Dendritic cell treated with granulocyte-macrophage colony-stimulating factor and Interleukin-4, amounts not matched to agents 40 ng/mL and 50 ng/mL, for 4 days (primary cell): ENCODE measurements at regions of chr10 and their contacts with region 1.

Region 1: DNA sequence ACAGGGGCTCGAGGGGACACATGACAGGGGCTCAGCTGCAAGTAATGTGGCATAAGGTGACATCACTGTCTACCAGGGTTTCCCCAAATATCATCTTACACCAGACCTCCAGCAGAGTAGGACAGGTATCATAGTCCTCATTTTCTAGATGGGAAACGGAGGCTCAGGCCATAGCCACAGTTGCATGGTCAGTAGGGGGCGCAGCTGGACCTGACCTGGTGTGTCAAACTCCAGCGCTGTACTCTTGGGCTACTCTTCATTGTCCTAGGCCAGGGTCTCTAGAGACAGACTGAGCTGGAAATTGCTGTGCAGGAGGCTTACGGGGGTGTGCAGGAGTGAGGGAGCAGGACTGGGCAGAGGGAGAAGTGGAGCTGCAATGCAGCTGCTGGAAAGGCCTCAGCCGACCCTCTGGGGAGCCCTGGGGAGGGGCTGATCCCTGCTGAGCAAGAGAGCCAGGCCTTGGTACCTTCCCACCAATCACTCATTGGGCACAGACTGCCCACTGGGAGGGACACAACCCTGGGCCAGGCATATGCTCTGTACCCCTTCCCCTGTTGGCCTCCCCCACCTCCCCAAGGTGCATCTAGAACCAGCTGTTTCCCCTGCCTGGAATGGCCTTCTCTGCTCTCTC is 89.9 kb downstream of the CDH23 start:
- H3K4me3 Mint-ChIP-seq: no peak overlapping the region
- H3K27ac Mint-ChIP-seq: no peak overlapping the region
- H3K4me1 Mint-ChIP-seq: peaks cover 8% of the 10 kb centered on the region
- H3K27me3 Mint-ChIP-seq: peaks cover 5% of the 10 kb centered on the region

Region 2: GRCh38 chr10:71569775-71570588 is 83.4 kb after region 1 on chr10:
- intact Hi-C with region 1: loop called (anchors 5 kb)
- H3K4me3 Mint-ChIP-seq: no peak overlapping the region
- H3K27ac Mint-ChIP-seq: no peak overlapping the region
- H3K4me1 Mint-ChIP-seq: peaks cover 9% of the 10 kb centered on the region
- H3K27me3 Mint-ChIP-seq: peaks cover 2% of the 10 kb centered on the region

Region 3: DNA sequence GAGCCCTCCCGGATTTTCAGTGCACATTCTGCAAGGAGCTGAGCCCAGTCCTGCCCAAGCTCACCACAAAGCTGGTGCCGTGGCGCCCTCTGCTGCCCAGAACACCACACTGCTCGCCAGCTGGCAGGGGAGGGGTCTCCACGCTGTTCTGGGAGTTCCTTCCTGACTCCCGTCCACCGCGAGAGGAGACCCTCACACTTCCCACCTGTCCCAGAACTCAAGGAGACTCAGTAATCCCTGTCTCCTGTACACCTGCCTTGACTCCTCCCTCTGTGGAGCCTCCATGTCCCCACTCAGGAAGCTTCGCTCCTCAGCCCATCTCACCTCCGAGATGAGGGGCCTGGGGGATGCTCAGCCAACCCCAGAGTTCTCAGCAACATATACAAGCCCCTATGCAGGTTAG is 221.7 kb after region 1 on chr10:
- intact Hi-C with region 1: loop called (anchors 10 kb)
- H3K4me3 Mint-ChIP-seq: no peak overlapping the region
- H3K27ac Mint-ChIP-seq: peak overlapping the region; percentile 67
- H3K4me1 Mint-ChIP-seq: peaks cover 73% of the 10 kb centered on the region
- H3K27me3 Mint-ChIP-seq: no peaks in the 10 kb centered on the region